ENCODE measurements at regions of chr15 and their contacts with region 1.

Region 1: DNA sequence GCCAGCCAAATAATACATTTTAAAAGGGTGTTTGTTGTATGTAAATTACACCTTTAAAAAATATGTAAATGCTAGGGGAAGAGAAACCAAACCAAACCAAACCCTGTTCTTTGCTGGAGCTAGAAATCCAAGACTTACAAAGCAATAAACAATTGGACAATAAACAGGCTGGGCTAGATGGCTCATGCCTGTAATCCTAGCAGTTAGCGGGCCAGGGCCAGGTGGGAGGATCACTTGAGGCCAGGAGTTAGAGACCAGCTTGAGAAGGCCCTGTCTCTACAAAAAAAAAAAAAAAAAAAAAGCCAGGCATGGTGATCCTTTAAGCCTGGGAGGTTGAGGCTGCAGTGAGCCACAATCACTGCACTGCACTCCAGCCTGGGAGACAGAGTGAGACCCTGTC is 12.5 kb downstream of the STOML1 start:
- DNase-seq: no peak
- ATAC-seq: no peak
- H3K4me3 ChIP-seq: no peak overlapping the region
- H3K27ac ChIP-seq: no peak overlapping the region
- H3K4me1 ChIP-seq: peaks cover 30% of the 10 kb centered on the region
- H3K27me3 ChIP-seq: 0 out of 2 replicates have a peak, but pooled peaks cover 3% of the 10 kb centered on the region
- CTCF ChIP-seq: no peak
- POLR2A ChIP-seq: no peak
- RAD21 ChIP-seq: no peak

Region 2: DNA sequence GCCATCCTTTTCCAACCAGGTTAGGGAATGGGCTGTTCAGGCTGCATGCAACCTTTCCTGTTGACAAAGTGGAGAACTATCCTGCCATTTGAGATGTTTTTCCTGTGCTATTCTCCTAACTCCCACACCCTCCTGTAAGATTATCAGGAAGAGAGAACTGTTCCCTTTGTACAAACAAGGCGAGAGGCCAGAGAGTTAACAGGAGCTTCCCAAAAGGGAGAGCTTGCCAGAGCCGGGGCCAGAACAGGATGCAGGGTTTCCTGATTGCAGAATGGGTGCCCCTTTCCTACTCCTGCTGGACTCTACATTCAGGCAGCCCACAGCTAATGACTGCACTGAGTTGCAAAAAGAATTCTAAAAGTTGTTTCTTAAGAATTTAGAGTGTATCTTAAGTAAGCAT is 32.0 kb after region 1 on chr15:
- CTCF ChIA-PET with region 1: no interaction called
- POLR2A ChIA-PET with region 1: no interaction called
- dilution Hi-C with region 1: no loop called
- in situ Hi-C with region 1: no loop called
- intact Hi-C with region 1: loop called (anchors 1 kb)
- DNase-seq: peak; percentile 46
- ATAC-seq: peak; percentile 79
- H3K4me3 ChIP-seq: no peak overlapping the region
- H3K27ac ChIP-seq: peak overlapping the region; percentile 59; the same call in 1 of the 2 replicates
- H3K4me1 ChIP-seq: peaks cover 9% of the 10 kb centered on the region
- H3K27me3 ChIP-seq: no peaks in the 10 kb centered on the region
- CTCF ChIP-seq: no peak
- POLR2A ChIP-seq: no peak
- RAD21 ChIP-seq: no peak

Region 3: GRCh38 chr15:74134387-74135027 is 154.9 kb after region 1 on chr15:
- CTCF ChIA-PET with region 1: no interaction called
- POLR2A ChIA-PET with region 1: no interaction called
- dilution Hi-C with region 1: no loop called
- in situ Hi-C with region 1: loop called (anchors 5 kb)
- intact Hi-C with region 1: no loop called
- DNase-seq: peak; percentile 23
- ATAC-seq: peak; percentile 72
- H3K4me3 ChIP-seq: no peak overlapping the region
- H3K27ac ChIP-seq: no peak overlapping the region
- H3K4me1 ChIP-seq: no peaks in the 10 kb centered on the region; the same call in 1 of the 2 replicates
- H3K27me3 ChIP-seq: peaks cover 89% of the 10 kb centered on the region
- CTCF ChIP-seq: peak; percentile 49
- POLR2A ChIP-seq: no peak
- RAD21 ChIP-seq: peak; percentile 44

Region 4: DNA sequence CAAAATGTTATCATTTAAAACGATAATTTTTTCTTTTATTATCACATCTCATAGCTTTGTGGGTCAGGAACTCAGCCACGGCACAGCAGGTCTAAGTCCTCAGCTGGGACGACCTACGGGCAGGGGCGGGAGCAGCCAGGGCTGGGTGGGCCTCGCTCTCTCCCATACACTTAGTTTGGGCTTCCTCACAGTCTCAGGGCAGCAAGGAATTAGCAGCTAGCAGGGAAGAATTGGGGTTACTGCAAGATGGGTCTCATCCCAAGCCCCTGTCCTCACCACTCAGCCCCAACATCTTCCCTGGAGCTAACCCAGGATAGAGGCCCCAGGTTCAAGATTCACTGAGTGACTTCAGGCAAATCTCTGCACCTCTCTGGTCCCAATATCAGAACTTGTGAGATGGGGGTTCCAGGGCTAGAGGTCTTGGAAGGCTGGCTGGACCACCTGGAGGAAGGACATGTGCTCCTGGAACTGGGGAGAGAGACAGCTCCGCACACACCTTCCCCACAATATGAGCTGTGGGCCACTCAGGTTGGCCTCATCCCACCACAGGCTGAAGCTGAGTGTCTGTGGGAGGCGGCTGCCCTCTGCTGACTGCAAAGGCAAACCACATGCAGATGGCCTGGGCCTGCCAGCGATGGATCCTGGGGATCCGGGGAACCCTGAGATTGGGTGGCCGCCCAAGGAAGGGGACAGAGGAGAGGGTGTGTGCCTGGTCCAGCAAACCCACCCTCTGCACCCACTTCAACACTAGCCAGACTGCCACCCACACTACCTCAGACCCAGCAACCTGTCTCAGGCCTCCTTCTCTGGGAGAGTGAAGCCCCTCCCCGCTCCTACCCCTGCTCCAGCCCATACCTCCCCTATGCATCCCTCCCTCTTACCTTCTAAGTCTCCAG is 342.8 kb after region 1 on chr15:
- CTCF ChIA-PET with region 1: no interaction called
- POLR2A ChIA-PET with region 1: no interaction called
- dilution Hi-C with region 1: no loop called
- in situ Hi-C with region 1: loop called (anchors 5 kb)
- intact Hi-C with region 1: no loop called
- DNase-seq: peak; percentile 58
- ATAC-seq: peak; percentile 87
- H3K4me3 ChIP-seq: no peak overlapping the region
- H3K27ac ChIP-seq: no peak overlapping the region
- H3K4me1 ChIP-seq: peaks cover 10% of the 10 kb centered on the region; the same call in 1 of the 2 replicates
- H3K27me3 ChIP-seq: peaks cover 22% of the 10 kb centered on the region
- CTCF ChIP-seq: peak; percentile 96
- POLR2A ChIP-seq: peak; percentile 36; the same call in 1 of the 2 replicates
- RAD21 ChIP-seq: peak; percentile 98

Measured in IMR-90 (cell line).